ENCODE measurements at regions of chr12 and their contacts with region 1.

Region 1: GRCh38 chr12:118398940-118399339 is 22.6 kb downstream of the SUDS3 start:
- DNase-seq: no peak
- H3K4me3 ChIP-seq: no peak overlapping the region
- H3K27ac ChIP-seq: no peak overlapping the region
- H3K4me1 ChIP-seq: no peaks in the 10 kb centered on the region; a peak in 1 of 4 replicates
- H3K27me3 ChIP-seq: no peaks in the 10 kb centered on the region
- CTCF ChIP-seq: no peak
- EP300 ChIP-seq: no peak
- RAD21 ChIP-seq: no peak

Region 2: GRCh38 chr12:118377884-118378470 is 21.0 kb before region 1 on chr12:
- CTCF ChIA-PET with region 1: interaction called, 94 read pairs
- POLR2A ChIA-PET with region 1: no interaction called
- DNase-seq: peak; percentile 73
- H3K4me3 ChIP-seq: peak overlapping the region; percentile 94 to 95
- H3K27ac ChIP-seq: peak overlapping the region; percentile 48 to 86; a peak in 2 of 4 replicates
- H3K4me1 ChIP-seq: peaks cover 9 to 16% of the 10 kb centered on the region in 2 experiments; a peak in 3 of 4 replicates
- H3K27me3 ChIP-seq: no peaks in the 10 kb centered on the region
- CTCF ChIP-seq: peak; percentile 98
- EP300 ChIP-seq: no peak
- RAD21 ChIP-seq: peak; percentile 65

Region 3: DNA sequence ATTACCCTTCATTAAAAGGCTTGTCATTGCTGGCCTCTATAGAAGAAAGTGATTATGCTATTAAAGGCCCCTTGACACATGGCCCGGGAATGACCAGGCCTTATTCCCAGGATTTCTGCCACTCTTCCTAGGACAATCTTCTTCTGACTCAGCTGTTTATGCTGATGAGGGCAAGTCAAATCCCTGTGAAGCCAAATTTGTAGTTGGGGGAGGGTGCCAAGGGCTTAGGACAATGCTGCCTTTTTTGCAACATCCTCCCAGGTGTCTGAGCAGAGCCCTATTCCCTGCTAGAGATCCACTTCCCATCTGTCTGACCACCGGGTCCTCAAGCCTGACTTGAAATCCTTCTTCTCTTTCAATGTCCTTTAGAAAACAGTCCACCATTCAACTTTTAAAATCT is 351.7 kb after region 1 on chr12:
- CTCF ChIA-PET with region 1: no interaction called
- POLR2A ChIA-PET with region 1: no interaction called
- DNase-seq: no peak
- H3K4me3 ChIP-seq: no peak overlapping the region
- H3K27ac ChIP-seq: no peak overlapping the region
- H3K4me1 ChIP-seq: no peaks in the 10 kb centered on the region
- H3K27me3 ChIP-seq: no peaks in the 10 kb centered on the region
- CTCF ChIP-seq: no peak
- EP300 ChIP-seq: no peak
- RAD21 ChIP-seq: no peak